Left colon (tissue), 2 donors: ENCODE measurements at regions of chr5 and their contacts with region 1.

Region 1: GRCh38 chr5:55691265-55692105 is 20.6 kb downstream of the SLC38A9 start:
- DNase-seq: no peak
- ATAC-seq: peak; percentile 67

Region 2: GRCh38 chr5:55254802-55255201 is 436.7 kb before region 1 on chr5:
- intact Hi-C with region 1: no loop called
- DNase-seq: no peak
- ATAC-seq: no peak

Region 3: GRCh38 chr5:55344392-55344992 is 347.0 kb before region 1 on chr5:
- intact Hi-C with region 1: loop called in 1 of 2 experiments (anchors 5 kb)
- DNase-seq: peak in 1 of 2 donors; percentile 71
- ATAC-seq: peak; percentile 67

Region 4: GRCh38 chr5:55407059-55407684 is 284.3 kb before region 1 on chr5:
- intact Hi-C with region 1: loop called in 1 of 2 experiments (anchors 2 kb)
- DNase-seq: no peak
- ATAC-seq: peak; percentile 90

Region 5: DNA sequence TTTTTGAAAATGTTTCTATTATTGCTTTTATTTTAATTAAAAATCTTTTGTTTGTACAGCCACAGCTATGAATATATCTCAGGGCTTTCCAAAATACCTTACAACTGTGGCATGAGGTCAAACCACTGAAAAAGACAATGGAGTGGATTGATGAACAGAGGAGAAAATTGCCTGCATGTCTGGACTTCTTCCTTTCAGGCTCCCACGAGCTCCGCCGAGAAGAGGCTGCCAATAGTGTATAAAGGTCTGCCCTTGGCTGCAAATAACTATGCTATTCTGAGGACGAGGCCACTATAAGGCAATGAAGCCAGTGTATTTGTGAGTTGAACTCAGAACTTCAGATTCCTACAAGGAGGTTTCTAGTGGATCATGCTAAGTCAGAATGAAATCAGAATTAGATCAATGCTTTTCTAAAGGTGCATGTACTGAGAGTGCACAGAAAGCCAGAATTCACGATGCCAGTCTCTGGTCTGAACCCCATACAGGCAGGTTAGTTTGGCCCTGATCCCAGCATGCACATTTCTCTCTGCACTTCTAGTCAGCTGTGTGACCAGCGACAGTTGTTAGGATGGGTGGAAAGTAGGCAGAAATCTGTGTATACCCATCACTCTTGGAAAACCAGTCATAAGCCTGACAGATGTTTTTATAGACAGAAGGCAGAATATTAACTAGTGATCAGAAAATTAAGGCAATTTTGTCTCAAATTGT is 114.0 kb before region 1 on chr5:
- intact Hi-C with region 1: no loop called
- DNase-seq: no peak
- ATAC-seq: peak; percentile 74